ENCODE measurements at regions of chr12 and their contacts with region 1.

Region 1: DNA sequence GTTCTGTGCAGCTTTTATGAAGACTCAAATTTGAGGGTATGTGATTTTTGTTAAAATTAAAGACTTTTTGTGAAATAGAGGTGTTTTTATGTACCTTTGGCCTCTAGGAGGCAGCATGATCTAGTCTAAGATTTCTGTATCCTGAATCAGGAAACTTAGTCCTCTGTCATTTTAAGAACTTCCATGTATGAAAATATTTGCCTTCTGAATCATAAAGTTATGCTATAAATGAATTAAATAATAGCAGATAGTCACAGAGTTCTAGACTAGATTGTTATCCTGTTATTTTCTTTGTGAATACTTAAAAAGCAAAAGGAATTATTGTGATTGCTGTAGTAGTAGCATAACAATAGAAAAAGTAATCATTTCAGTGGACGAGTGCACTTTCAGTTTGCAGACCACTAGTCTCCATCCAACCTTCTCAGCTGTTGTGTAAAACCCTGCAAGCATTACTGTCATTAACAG is 56.3 kb downstream of the FGD4 start:
- DNase-seq: no peak
- ATAC-seq: peak; percentile 48; the same call in 2 of the 3 replicates
- H3K4me3 ChIP-seq: no peak overlapping the region
- H3K27ac ChIP-seq: no peak overlapping the region
- H3K4me1 ChIP-seq: no peaks in the 10 kb centered on the region; the same call in 1 of the 2 replicates
- H3K27me3 ChIP-seq: no peaks in the 10 kb centered on the region
- CTCF ChIP-seq: peak; percentile 46 to 70 (median 49); a peak in 5 of 6 replicates
- EP300 ChIP-seq: no peak
- POLR2A ChIP-seq: no peak
- RAD21 ChIP-seq: peak; percentile 82

Region 2: DNA sequence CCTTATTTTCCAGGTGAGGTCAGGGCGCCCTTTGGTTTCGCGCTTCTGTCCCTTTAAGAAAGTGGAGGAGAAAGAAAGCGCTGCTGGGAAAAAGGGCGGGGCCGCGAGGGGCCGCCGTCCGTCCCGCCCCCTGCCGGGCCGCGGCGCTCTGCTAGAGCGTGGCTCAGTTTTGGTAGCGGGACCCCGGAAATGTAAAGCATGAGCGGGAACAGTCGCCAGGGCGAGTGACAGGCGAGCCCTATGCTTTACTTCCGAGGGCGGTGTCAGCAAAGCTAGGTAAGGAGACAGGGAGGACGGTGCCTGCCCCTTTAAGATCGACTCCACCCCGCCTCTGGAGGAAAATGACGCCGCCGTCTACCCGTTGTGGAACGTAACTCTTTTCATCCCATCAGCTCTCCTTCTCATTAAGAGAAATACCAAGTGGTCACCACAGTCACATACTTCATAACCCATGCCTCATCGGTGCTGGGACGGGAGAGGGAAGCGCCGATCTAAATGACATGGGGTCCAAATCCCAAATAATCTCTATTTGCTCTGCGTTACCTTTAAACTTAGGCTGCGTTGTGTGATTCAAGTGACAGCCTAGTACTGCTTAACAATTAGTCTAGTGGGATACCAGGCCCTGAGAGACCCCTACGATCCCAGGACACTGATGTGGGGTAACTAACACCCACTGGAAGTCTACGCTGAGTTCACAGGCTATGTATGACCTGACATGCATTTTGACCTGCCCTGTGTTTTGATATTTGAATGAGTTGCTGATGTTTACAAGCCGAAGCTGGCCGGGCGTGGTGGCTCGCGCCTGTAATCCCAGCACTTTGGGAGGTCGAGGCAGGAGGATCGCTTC is 796.3 kb before region 1 on chr12 and contains the start of gene ETFBKMT:
- CTCF ChIA-PET with region 1: interaction called, 19 read pairs
- POLR2A ChIA-PET with region 1: no interaction called
- RAD21 ChIA-PET with region 1: interaction called, 3 read pairs
- SMC1A ChIA-PET with region 1: no interaction called
- in situ Hi-C with region 1: no loop called
- intact Hi-C with region 1: no loop called
- DNase-seq: peak; percentile 90
- ATAC-seq: peak; percentile 99
- H3K4me3 ChIP-seq: peak within 1 kb of the TSS; percentile 85
- H3K27ac ChIP-seq: peak within 1 kb of the TSS; percentile 87
- H3K4me1 ChIP-seq: peaks cover 5% of the 10 kb centered on the region; the same call in 1 of the 2 replicates
- H3K27me3 ChIP-seq: no peaks in the 10 kb centered on the region
- CTCF ChIP-seq: peak; percentile 18 to 34 (median 22); a peak in 4 of 6 replicates
- EP300 ChIP-seq: no peak
- POLR2A ChIP-seq: peak; percentile 54; the same call in 1 of the 2 replicates
- RAD21 ChIP-seq: no peak
- polyA plus RNA-seq, gene ETFBKMT: 0.49 to 0.79 TPM

Region 3: GRCh38 chr12:32106517-32107358 is 348.9 kb before region 1 on chr12 and contains the start of gene BICD1:
- CTCF ChIA-PET with region 1: no interaction called
- POLR2A ChIA-PET with region 1: no interaction called
- RAD21 ChIA-PET with region 1: no interaction called
- SMC1A ChIA-PET with region 1: no interaction called
- in situ Hi-C with region 1: no loop called
- intact Hi-C with region 1: no loop called
- DNase-seq: peak; percentile 32
- ATAC-seq: peak; percentile 88
- H3K4me3 ChIP-seq: peak within 1 kb of the TSS; percentile 80
- H3K27ac ChIP-seq: peak within 1 kb of the TSS; percentile 63
- H3K4me1 ChIP-seq: peaks cover 5% of the 10 kb centered on the region
- H3K27me3 ChIP-seq: no peaks in the 10 kb centered on the region
- CTCF ChIP-seq: peak; percentile 2 to 56 (median 21); a peak in 3 of 6 replicates
- EP300 ChIP-seq: no peak
- POLR2A ChIP-seq: peak; percentile 94
- RAD21 ChIP-seq: peak; percentile 44; the same call in 1 of the 2 replicates
- polyA plus RNA-seq, gene BICD1: 4.7 to 5.6 TPM

Region 4: DNA sequence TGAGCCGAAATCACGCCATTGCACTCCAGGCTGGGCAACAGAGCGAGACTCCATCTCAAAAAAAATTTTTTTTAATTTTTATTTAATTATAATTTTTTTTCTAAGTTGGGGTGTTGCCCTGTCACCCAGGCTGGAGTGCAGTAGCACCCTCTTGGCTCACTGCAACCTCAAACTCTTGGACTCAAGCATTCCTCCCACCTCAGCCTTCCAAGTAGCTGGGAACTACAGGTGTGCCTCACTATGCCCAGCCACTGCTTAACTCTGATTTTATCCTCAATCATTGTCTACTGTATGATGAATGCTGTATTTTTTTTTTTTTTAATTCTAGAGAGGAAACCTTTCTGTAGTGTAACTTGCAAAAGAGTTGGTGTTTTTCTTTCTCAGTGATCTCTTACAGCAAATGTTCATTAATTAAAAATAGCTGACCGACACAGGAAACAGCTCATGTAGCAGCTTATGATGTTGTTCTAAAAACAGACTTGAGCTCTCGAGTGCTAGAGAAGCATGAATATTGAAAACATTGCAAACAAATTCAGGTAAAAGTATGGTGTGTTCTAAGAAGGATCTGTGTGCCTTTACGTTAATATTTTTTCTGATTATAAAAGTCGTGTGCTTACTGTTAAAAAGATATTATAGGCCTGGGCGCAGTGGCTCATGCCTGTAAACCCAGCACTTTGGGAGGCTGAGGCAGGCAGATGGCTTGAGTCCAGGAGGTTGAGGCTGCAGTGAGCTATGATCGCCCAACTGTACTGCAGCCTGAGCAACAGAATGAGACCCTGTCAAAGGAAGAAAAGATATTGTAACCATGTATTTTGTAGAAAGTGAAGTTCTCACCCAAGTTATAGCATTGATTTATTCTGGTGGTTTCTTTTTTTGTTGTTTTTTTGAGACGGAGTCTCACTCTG is 12.6 kb after region 1 on chr12:
- CTCF ChIA-PET with region 1: interaction called, 21 read pairs
- POLR2A ChIA-PET with region 1: interaction called, 3 read pairs
- RAD21 ChIA-PET with region 1: interaction called, 3 read pairs
- SMC1A ChIA-PET with region 1: interaction called, 22 read pairs
- in situ Hi-C with region 1: no loop called
- intact Hi-C with region 1: no loop called
- DNase-seq: no peak
- ATAC-seq: no peak
- H3K4me3 ChIP-seq: no peak overlapping the region
- H3K27ac ChIP-seq: no peak overlapping the region
- H3K4me1 ChIP-seq: peaks cover 3% of the 10 kb centered on the region; the same call in 1 of the 2 replicates
- H3K27me3 ChIP-seq: no peaks in the 10 kb centered on the region
- CTCF ChIP-seq: no peak
- EP300 ChIP-seq: no peak
- POLR2A ChIP-seq: no peak
- RAD21 ChIP-seq: no peak

Region 5: DNA sequence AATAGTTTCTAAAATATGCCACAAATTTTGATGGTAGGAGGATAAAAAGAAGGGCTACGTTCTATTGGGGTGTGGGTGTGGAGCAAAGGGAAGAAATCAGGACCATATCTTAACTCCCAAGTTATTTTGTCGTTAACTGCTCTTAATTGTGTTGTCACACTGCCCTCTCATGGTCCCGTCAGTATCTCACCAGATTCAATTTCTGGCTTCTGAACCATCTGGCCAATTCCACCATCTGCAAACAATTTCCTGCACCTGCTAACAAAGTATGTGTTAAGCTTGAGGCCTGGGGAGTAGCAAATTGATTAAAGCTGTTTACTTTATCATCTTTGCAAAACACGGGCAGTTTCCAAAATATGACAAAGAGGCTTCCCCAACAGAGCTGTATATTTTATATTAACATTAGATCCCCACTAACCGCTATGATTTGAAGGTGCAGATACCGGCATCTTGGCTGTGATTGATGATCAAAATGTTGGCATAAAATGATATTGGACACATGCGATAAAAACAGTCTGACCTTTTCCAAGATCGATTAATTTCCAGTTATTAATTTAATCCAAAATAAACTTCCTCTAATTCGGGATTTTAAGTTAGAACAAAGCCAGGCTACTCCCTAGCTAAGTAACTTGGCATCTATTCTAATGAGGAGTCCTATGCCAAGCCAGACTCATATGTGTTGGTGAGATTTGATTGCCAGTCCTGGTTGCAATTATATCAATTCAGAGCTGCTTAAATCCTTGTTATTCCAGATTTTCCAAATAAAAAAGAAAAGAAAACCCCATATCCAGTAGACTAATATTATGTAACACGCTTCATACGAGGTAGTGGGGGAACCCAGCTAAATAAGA is 216.5 kb after region 1 on chr12:
- CTCF ChIA-PET with region 1: interaction called, 106 read pairs
- POLR2A ChIA-PET with region 1: interaction called, 6 read pairs
- RAD21 ChIA-PET with region 1: interaction called, 73 read pairs
- SMC1A ChIA-PET with region 1: interaction called, 108 read pairs
- in situ Hi-C with region 1: loop called (anchors 5 kb)
- intact Hi-C with region 1: loop called (anchors 1 kb)
- DNase-seq: no peak
- ATAC-seq: peak; percentile 74
- H3K4me3 ChIP-seq: no peak overlapping the region
- H3K27ac ChIP-seq: no peak overlapping the region
- H3K4me1 ChIP-seq: peaks cover 10% of the 10 kb centered on the region
- H3K27me3 ChIP-seq: no peaks in the 10 kb centered on the region
- CTCF ChIP-seq: peak; percentile 56 to 76 (median 72); a peak in 5 of 6 replicates
- EP300 ChIP-seq: no peak
- POLR2A ChIP-seq: no peak
- RAD21 ChIP-seq: peak; percentile 87

Region 6: DNA sequence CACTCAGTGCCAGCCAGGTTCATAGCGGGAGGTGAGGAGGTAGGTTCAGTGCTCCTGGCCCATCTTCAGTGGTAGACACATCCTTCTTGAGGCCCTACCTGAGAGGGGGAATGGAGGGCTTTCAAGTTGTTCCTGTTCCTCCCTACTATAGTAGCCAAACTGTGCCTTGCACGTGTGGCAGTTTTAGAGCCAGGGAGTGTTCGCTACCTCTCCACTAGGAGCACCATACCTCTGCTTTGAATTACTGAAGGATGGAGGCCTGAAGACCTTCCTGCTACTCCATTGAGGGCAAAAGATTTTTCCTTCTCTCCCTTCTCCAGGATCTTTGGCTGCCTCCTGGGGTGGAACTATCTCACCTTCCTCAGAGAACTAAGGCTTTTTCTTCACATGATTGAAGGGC is 1560.7 kb after region 1 on chr12:
- CTCF ChIA-PET with region 1: interaction called, 3 read pairs
- POLR2A ChIA-PET with region 1: no interaction called
- RAD21 ChIA-PET with region 1: no interaction called
- SMC1A ChIA-PET with region 1: interaction called, 3 read pairs
- in situ Hi-C with region 1: loop called (anchors 10 kb)
- intact Hi-C with region 1: loop called (anchors 5 kb)
- DNase-seq: no peak
- ATAC-seq: peak; percentile 57; the same call in 2 of the 3 replicates
- H3K4me3 ChIP-seq: no peak overlapping the region
- H3K27ac ChIP-seq: no peak overlapping the region
- H3K4me1 ChIP-seq: no peaks in the 10 kb centered on the region
- H3K27me3 ChIP-seq: no peaks in the 10 kb centered on the region
- CTCF ChIP-seq: no peak
- EP300 ChIP-seq: no peak
- POLR2A ChIP-seq: no peak
- RAD21 ChIP-seq: no peak